ENCODE measurements at regions of chr5 and their contacts with region 1.

Region 1: GRCh38 chr5:66066826-66067225 is 77.3 kb upstream of the SREK1 start:
- DNase-seq: no peak
- ATAC-seq: no peak
- H3K4me3 ChIP-seq: no peak overlapping the region
- H3K27ac ChIP-seq: no peak overlapping the region
- H3K4me1 ChIP-seq: no peaks in the 10 kb centered on the region
- H3K27me3 ChIP-seq: no peaks in the 10 kb centered on the region
- CTCF ChIP-seq: no peak
- POLR2A ChIP-seq: no peak
- RAD21 ChIP-seq: no peak

Region 2: DNA sequence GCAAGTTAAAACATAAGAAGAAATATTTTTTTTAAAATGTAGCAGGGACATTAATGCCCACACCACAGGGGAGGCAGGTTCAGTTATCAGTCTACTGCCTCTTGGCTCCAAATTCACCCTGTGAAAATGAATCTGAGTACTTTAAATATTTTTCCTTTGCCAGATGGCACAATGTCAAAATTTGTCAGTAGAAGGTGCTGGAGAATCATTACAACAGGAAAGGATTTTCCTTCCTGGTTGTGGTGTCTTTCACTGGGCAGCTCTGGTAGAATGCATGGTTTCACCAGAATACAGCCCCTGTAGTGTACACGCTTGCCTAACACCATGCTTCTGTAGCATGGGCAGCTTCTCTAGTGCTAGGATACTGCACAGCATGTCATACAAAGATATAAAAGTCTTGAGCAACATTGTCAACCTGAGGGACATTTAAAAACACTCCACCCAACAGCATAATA is 67.6 kb after region 1 on chr5:
- CTCF ChIA-PET with region 1: no interaction called
- POLR2A ChIA-PET with region 1: no interaction called
- RAD21 ChIA-PET with region 1: no interaction called
- intact Hi-C with region 1: loop called (anchors 2 kb)
- DNase-seq: no peak
- ATAC-seq: no peak
- H3K4me3 ChIP-seq: no peak overlapping the region
- H3K27ac ChIP-seq: no peak overlapping the region
- H3K4me1 ChIP-seq: peaks cover 0 to 3% of the 10 kb centered on the region in 2 experiments; a peak in 1 of 4 replicates
- H3K27me3 ChIP-seq: no peaks in the 10 kb centered on the region
- CTCF ChIP-seq: no peak
- POLR2A ChIP-seq: no peak
- RAD21 ChIP-seq: no peak

Measured in HCT116 (cell line).